ENCODE measurements at regions of chr2 and their contacts with region 1.

Region 1: DNA sequence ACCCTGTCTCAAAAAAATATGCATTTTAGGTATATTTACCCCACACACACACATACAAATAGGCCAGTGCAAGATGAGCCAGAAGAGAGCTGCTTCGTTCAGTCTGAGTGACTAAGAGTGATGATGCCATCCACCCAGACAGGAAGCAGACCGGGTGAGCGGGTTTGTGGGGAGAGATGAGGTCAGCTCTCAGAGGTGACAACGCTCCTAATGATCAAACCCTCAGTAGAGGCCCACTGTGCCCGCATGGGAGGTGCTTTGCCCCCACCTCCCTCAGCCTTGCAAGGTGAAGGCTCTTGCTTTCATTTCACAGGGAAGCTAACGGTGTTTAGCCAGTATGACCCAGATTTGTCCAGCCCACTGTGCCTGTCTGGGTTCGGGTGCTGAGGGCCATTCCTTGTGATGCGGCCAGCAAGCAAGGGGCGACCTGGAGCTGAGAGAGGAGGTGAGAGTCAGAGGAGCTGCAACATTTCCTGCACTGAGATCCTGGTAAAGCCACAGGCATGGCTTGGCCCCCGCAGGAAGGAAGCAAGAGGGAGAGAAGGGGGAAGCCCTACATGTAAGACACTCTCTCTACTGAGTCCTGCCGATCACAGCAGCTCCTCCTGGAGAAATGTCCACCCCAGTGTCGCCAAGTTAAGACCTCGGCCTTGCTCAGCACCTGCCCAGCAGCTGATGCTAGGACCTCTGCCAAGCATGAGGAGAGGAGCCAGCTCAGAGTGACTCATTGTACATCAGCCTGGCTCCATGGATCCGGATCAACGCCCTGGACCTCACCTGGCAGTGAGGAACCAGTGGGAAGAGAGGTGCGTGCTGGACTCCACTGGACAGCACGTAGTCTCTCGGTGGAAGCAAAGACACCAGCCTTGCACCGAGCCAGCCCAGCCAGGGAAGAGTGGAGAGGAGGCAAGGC is 37.0 kb downstream of the NIFK start:
- DNase-seq: peak; percentile 96
- H3K4me3 Mint-ChIP-seq: peak overlapping the region; percentile 76
- H3K27ac Mint-ChIP-seq: peak overlapping the region; percentile 93
- H3K4me1 Mint-ChIP-seq: peaks cover 37% of the 10 kb centered on the region
- H3K27me3 Mint-ChIP-seq: no peaks in the 10 kb centered on the region

Region 2: DNA sequence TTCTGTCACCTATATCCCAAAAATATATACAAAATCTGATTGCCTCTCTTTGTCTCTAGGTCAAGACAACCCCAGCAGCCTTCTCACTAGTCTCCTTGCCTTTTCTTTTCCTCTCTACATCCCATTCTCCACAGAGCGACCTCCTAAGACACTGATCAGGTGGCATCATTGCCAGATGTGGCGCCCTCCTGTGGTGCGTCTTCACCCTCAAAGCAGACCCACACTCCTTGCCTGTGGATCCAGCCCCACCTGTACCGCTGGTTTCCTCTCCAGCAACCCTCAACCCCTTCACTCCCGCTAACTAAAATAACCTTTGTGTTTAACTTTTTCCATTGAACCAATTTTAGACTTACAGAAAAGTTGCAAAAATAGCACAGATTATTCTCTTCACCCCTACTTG is 690.7 kb before region 1 on chr2:
- CTCF ChIA-PET with region 1: no interaction called
- intact Hi-C with region 1: no loop called
- DNase-seq: no peak
- H3K4me3 Mint-ChIP-seq: no peak overlapping the region
- H3K27ac Mint-ChIP-seq: no peak overlapping the region
- H3K4me1 Mint-ChIP-seq: no peaks in the 10 kb centered on the region
- H3K27me3 Mint-ChIP-seq: peaks cover 9% of the 10 kb centered on the region

Region 3: DNA sequence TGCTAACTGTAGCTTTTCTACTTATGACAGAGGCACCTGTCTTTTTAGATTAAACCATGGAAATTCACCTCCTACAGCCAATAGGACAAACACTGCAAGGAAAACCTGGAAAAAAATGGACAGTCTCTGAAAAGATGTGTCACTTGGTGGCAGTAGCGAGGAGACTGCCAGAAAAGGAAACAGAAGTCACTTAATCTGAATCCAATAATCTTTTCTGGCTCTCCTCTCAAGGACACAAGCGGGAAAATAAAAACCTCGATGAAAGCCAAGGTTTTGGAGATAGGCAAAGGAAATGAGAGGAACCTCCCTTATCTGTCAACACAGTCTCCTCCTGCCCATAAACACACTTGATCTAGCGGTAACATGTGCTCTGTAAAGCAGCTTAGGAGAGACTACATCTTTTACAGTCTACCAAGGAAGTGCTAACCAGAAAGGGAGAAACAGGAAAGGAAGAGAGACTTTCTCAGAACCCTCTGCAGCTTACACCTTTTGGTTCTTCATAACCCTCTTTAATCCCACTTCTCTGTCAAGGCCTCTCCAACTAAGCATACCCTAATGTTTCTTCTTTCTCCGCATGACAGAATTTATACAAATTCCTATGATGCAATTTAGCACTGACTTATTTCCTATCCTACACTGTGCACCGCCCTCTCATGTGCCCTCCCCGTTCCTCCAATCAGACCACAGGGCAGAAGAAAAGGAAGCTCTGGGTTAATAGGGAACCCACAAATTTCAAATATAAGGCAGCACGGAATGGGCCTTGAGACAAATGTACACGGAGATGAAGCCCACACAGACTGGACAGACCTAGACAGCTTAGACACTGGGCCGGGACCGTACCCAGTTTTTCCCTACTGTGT is 103.2 kb before region 1 on chr2:
- CTCF ChIA-PET with region 1: no interaction called
- intact Hi-C with region 1: loop called (anchors 1 kb)
- DNase-seq: peak; percentile 61
- H3K4me3 Mint-ChIP-seq: peak overlapping the region; percentile 82
- H3K27ac Mint-ChIP-seq: peak overlapping the region; percentile 87
- H3K4me1 Mint-ChIP-seq: peaks cover 49% of the 10 kb centered on the region
- H3K27me3 Mint-ChIP-seq: no peaks in the 10 kb centered on the region

Region 4: GRCh38 chr2:121755236-121756111 is 55.8 kb after region 1 on chr2 and contains the start of gene TSN:
- CTCF ChIA-PET with region 1: no interaction called
- intact Hi-C with region 1: loop called (anchors 1 kb)
- DNase-seq: peak; percentile 98
- H3K4me3 Mint-ChIP-seq: peak within 1 kb of the TSS; percentile 91
- H3K27ac Mint-ChIP-seq: peak within 1 kb of the TSS; percentile 80
- H3K4me1 Mint-ChIP-seq: peaks cover 32% of the 10 kb centered on the region
- H3K27me3 Mint-ChIP-seq: no peaks in the 10 kb centered on the region
- total RNA-seq, gene TSN: 49.8 to 52.6 TPM

Region 5: DNA sequence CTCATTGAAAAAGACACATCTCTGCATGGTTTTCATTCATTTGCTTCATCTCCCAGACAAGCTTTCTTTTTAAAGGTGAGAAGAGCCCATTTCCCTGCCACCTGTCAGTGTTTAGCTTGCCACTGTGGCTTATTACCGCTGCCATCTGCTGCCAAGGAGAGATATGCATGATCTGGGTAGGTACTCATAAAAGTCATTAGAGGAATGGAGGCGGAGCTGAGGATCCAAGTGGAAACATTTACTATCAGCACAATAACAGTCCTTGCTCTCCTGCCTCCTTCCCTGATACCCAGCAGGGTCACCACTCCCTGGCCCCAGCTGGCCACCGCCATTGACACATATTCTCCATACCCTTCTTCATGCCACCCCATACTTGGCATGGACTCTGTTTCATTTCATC is 446.2 kb after region 1 on chr2:
- CTCF ChIA-PET with region 1: no interaction called
- intact Hi-C with region 1: no loop called
- DNase-seq: no peak
- H3K4me3 Mint-ChIP-seq: no peak overlapping the region
- H3K27ac Mint-ChIP-seq: no peak overlapping the region
- H3K4me1 Mint-ChIP-seq: no peaks in the 10 kb centered on the region
- H3K27me3 Mint-ChIP-seq: no peaks in the 10 kb centered on the region

Region 6: GRCh38 chr2:122315306-122315705 is 615.6 kb after region 1 on chr2:
- CTCF ChIA-PET with region 1: no interaction called
- intact Hi-C with region 1: no loop called
- DNase-seq: no peak
- H3K4me3 Mint-ChIP-seq: no peak overlapping the region
- H3K27ac Mint-ChIP-seq: no peak overlapping the region
- H3K4me1 Mint-ChIP-seq: no peaks in the 10 kb centered on the region
- H3K27me3 Mint-ChIP-seq: no peaks in the 10 kb centered on the region

Measured in activated naive CD4-positive, alpha-beta T cell treated with anti-CD3 and anti-CD28 coated beads for 36 hours (primary cell).